ENCODE measurements at regions of chr19 and their contacts with region 1.

Region 1: DNA sequence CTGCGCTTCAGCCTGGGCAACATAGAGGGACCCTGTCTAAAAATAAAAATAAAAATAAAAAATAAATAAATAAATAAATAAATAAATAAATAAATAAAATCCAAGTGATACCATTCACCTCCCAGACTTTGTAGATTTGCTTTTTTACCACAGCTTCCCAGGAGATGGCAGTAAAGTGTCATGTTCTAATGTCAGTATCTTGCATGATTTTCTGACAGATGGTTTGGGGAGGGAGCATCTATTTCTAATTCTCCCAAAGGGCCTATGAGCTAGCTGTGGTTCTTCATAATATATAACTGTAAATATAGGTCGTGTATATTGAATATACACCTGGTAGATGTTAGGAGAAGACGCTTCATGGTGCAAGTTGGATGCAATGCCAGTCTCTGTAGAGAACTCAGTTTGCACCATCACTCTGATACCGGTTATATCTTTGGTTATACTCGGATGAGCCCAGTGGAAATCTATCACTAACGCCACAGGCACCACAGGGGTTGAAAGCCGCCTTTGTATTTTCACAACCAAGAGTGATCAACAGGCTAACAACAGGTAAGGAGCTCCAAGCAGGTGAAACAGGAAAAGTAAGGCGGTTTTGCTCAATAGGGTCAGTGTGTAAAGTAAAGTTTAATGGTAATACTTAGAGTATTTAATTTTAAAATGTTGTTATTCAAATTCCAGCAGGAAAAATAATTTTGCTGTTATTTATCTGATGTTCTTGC is 13.9 kb downstream of the APLP1 start:
- DNase-seq: no peak
- H3K4me3 ChIP-seq: no peak overlapping the region
- H3K27ac ChIP-seq: no peak overlapping the region
- H3K4me1 ChIP-seq: peaks cover 0 to 6% (median 1%) of the 10 kb centered on the region in 4 experiments; a peak in 3 of 7 replicates
- H3K27me3 ChIP-seq: 0 out of 7 replicates have a peak, but pooled peaks cover 0 to 5% (median 1%) of the 10 kb centered on the region in 4 experiments
- CTCF ChIP-seq: peak in 2 of 3 experiments; percentile 46; a peak in 2 of 4 replicates
- EP300 ChIP-seq: no peak
- POLR2A ChIP-seq: no peak
- RAD21 ChIP-seq: peak; percentile 74 to 78

Region 2: DNA sequence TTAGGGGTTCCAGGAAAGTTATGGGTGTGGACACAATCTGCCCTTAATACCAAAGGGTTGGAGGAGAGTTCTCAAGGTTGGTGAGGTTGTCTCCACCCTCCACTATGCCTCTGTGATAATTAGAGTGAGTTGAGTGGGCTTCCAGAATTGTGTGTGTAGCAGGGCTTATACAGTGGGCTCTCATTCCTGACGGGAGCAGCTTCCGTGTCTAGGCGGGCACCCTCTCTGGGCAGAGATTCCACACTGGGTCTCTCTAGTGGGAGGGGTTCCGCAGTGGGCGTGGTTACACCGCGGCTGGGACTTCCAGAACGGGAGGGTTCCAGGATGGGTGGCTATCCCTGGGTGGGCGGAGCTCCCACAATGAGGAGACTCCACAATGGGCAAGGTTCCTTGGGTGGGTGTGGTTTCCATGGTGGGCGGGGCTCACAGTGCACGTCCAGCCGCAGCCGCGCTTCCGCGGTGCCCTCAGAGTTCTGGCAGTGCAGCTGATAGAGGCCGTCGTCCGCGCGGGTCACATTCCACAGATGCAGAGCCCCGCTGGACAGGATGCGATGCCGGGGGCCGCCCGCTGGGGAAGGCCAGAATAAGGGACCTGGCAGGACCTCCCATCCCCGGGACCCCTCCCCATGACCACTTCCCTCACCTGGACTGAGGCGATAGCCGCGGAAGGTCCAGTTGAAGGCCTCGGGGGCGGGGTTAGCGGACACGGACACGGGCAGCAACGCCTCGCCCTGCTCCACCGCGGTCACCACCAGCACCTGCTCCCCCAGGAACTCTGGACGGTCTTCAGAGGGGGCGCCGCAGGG is 38.4 kb before region 1 on chr19:
- CTCF ChIA-PET with region 1: no interaction called
- POLR2A ChIA-PET with region 1: no interaction called
- DNase-seq: peak in 1 of 2 experiments; percentile 93
- H3K4me3 ChIP-seq: peak overlapping the region in 2 of 4 experiments; percentile 14 to 51; a peak in 4 of 8 replicates
- H3K27ac ChIP-seq: no peak overlapping the region
- H3K4me1 ChIP-seq: peaks cover 0 to 16% (median 5%) of the 10 kb centered on the region in 4 experiments; a peak in 5 of 7 replicates
- H3K27me3 ChIP-seq: peaks cover 20 to 40% (median 31%) of the 10 kb centered on the region in 4 experiments
- CTCF ChIP-seq: no peak
- EP300 ChIP-seq: no peak
- POLR2A ChIP-seq: no peak
- RAD21 ChIP-seq: no peak

Region 3: DNA sequence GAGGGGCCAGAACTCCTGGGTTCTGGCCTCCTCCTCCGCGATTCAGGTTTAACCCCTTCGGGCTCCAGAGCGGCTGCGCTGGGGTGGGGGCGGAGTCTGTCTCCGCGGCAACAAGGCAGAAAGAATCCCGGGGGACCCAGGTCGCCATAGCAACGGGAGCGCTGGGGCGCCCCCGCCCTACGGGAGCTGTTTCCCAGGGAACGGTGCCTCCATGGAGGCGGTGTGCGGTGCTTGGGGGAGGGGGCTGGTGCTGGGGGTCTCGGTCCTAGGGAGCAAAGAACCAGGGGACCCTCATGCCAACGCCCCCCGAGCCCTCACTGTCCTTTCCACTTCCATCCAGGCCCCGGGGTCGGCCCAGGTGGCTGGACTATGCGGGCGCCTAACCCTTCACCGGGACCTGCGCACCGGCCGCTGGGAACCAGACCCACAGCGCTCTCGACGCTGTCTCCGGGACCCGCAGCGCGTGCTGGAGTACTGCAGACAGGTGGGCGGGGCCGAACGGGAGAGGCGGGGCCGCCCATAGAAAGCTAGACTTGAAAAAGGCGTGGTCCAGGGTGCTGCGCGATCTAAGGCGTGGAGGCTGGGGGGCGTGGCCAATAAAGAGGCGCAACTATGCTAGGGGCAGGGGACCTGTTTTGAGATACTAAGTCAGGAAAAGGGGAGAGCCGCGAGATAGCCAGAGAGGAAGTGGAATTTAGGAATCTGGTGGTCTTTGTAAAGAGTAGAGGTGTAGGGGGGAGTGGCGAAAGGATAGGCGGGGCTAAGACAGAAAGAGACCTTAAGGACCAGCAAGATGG is 12.7 kb before region 1 on chr19:
- CTCF ChIA-PET with region 1: interaction called, 15 read pairs
- POLR2A ChIA-PET with region 1: interaction called, 10 read pairs
- DNase-seq: peak; percentile 82 to 94
- H3K4me3 ChIP-seq: peak overlapping the region; percentile 38 to 64 (median 52); a peak in 7 of 8 replicates
- H3K27ac ChIP-seq: no peak overlapping the region
- H3K4me1 ChIP-seq: peaks cover 0 to 12% (median 8%) of the 10 kb centered on the region in 4 experiments; a peak in 5 of 7 replicates
- H3K27me3 ChIP-seq: peaks cover 3 to 12% (median 9%) of the 10 kb centered on the region in 4 experiments
- CTCF ChIP-seq: 0 out of 4 replicates have a peak, but pooled peaks of 1 of the 3 experiments have one; percentile 4
- EP300 ChIP-seq: no peak
- POLR2A ChIP-seq: no peak
- RAD21 ChIP-seq: no peak

Region 4: GRCh38 chr19:35911790-35912189 is 29.5 kb after region 1 on chr19:
- CTCF ChIA-PET with region 1: interaction called, 11 read pairs
- POLR2A ChIA-PET with region 1: interaction called, 3 read pairs
- DNase-seq: no peak
- H3K4me3 ChIP-seq: no peak overlapping the region
- H3K27ac ChIP-seq: no peak overlapping the region
- H3K4me1 ChIP-seq: peaks cover 0 to 17% (median 7%) of the 10 kb centered on the region in 4 experiments; a peak in 4 of 7 replicates
- H3K27me3 ChIP-seq: no peaks in the 10 kb centered on the region
- CTCF ChIP-seq: no peak
- EP300 ChIP-seq: no peak
- POLR2A ChIP-seq: no peak
- RAD21 ChIP-seq: no peak

Region 5: DNA sequence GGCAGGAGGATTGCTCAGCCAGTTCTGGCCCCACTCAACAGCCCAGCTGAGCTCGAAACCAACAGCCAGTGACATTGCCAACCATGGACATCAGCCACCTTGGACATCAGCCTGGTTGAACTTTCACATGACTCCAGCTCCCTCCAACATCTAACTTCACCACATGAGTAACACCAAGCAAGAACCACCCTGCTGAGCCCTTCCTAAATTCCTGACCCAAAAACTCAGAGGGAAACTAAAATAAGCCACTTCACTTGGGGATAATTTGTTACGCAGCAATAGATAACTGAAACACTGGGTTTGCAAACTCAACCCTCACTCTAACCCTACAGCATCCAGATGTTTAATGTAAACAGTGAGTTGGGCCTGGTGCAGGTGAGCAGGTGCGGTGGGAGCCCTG is 43.2 kb after region 1 on chr19:
- CTCF ChIA-PET with region 1: interaction called, 23 read pairs
- POLR2A ChIA-PET with region 1: no interaction called
- DNase-seq: no peak
- H3K4me3 ChIP-seq: no peak overlapping the region
- H3K27ac ChIP-seq: no peak overlapping the region
- H3K4me1 ChIP-seq: no peaks in the 10 kb centered on the region
- H3K27me3 ChIP-seq: no peaks in the 10 kb centered on the region
- CTCF ChIP-seq: no peak
- EP300 ChIP-seq: no peak
- POLR2A ChIP-seq: no peak
- RAD21 ChIP-seq: no peak

Region 6: GRCh38 chr19:35931161-35931873 is 49.0 kb after region 1 on chr19:
- CTCF ChIA-PET with region 1: interaction called, 23 read pairs
- POLR2A ChIA-PET with region 1: interaction called, 6 read pairs
- DNase-seq: peak; percentile 95 to 99
- H3K4me3 ChIP-seq: peak overlapping the region in 1 of 4 experiments; percentile 53; a peak in 3 of 8 replicates
- H3K27ac ChIP-seq: no peak overlapping the region
- H3K4me1 ChIP-seq: peaks cover 0 to 13% (median 2%) of the 10 kb centered on the region in 4 experiments; a peak in 4 of 7 replicates
- H3K27me3 ChIP-seq: no peaks in the 10 kb centered on the region
- CTCF ChIP-seq: peak; percentile 85 to 98 (median 93)
- EP300 ChIP-seq: no peak
- POLR2A ChIP-seq: peak in 1 of 2 experiments; percentile 91; a peak in 2 of 3 replicates
- RAD21 ChIP-seq: peak; percentile 97 to 99

Region 7: DNA sequence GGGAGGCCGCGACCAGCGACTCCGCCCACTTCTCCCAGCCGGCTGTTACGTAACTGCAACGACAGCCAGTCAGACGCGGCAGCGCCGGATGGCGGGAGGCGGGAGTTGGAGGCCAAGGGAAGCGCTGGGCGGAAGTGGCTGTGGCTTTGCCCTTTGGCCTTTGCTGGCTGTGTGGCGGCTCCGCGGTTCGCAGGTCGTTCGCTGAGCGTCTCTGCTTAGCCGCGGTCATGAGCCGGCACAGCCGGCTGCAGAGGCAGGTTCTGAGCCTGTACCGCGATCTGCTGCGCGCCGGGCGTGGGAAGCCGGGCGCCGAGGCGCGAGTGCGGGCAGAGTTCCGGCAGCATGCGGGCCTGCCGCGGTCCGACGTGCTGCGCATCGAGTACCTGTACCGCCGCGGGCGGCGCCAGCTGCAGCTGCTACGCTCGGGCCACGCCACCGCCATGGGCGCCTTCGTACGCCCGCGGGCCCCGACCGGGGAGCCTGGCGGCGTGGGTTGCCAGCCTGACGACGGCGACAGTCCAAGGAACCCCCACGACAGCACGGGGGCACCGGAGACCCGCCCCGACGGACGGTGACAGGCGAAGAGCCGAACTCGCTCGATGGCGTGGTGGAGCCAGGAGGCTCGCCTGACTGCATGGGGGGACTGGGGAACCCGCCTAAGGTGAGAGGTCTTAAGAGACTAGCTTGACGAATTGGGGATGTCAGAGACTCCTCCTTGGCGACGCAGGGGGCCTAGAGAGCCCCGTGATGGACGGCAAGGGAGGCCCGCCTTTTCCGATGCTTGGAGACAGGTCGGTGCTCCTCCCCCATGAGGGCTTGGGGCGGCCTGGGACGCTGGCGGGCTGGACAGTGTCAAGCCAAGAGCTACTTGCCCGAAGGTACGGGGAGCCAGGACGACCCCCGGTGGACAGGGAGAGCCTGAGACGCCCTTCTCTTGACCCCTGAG is 113.0 kb after region 1 on chr19 and contains the start of gene SDHAF1:
- CTCF ChIA-PET with region 1: interaction called, 10 read pairs
- POLR2A ChIA-PET with region 1: no interaction called
- DNase-seq: peak; percentile 77 to 95
- H3K4me3 ChIP-seq: peak within 1 kb of the TSS; percentile 75 to 94 (median 80)
- H3K27ac ChIP-seq: no peak within 1 kb of the TSS
- H3K4me1 ChIP-seq: peaks cover 0 to 5% (median 1%) of the 10 kb centered on the region in 4 experiments; a peak in 4 of 7 replicates
- H3K27me3 ChIP-seq: no peaks in the 10 kb centered on the region
- CTCF ChIP-seq: no peak
- EP300 ChIP-seq: no peak
- POLR2A ChIP-seq: no peak
- RAD21 ChIP-seq: peak in 1 of 2 experiments; percentile 23; a peak in 1 of 4 replicates
- total RNA-seq, gene SDHAF1: 16.0 and 16.8 TPM in 2 replicates

Measured in H1 (cell line).